ENCODE measurements at regions of chr1 and their contacts with region 1.

Region 1: DNA sequence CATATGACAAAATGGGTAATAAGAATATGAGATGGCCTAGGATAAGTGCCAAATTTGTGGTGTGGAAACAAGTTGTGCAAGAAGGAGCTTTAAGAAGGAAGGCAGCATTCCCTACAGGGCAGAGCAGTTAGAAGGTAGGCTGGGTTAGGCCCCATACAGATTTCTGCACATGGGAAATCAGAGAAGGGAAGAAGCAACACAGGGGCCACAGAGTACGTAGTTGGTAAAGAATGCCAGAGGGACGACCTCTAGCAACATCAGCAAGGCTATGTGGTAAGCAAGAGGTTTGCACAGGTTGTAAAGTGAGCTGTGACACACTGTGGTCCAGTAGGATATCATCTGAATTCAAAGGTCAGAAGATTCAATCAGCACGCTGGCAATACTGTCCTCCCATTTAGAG is 765.6 kb upstream of the B3GALT2 start:
- DNase-seq: peak; percentile 66
- H3K4me3 Mint-ChIP-seq: no peak overlapping the region
- H3K27ac Mint-ChIP-seq: no peak overlapping the region
- H3K4me1 Mint-ChIP-seq: peaks cover 13% of the 10 kb centered on the region
- H3K27me3 Mint-ChIP-seq: no peaks in the 10 kb centered on the region
- CTCF ChIP-seq: no peak

Region 2: DNA sequence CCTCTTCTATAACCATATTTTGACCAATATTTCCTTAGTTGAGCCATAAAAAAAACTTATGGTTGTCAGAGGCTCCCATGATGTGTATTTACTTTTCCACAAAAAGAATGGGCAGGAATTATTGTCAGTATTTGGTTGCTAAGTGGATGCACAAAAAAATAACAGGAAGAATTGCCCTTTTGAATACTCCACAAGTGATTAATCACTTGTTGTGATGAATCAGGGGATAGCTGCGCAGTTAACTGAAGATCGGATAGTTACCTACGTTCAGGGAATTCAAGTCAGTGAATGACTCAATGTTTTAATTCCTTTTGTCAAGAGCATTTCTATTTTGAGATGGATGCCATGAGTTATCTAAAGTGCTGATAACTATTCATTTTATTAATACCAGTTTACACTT is 19.6 kb after region 1 on chr1:
- CTCF ChIA-PET with region 1: interaction called, 3 read pairs
- POLR2A ChIA-PET with region 1: no interaction called
- intact Hi-C with region 1: loop called (anchors 2 kb)
- DNase-seq: peak; percentile 65
- H3K4me3 Mint-ChIP-seq: no peak overlapping the region
- H3K27ac Mint-ChIP-seq: peak overlapping the region; percentile 32
- H3K4me1 Mint-ChIP-seq: peaks cover 13% of the 10 kb centered on the region
- H3K27me3 Mint-ChIP-seq: no peaks in the 10 kb centered on the region
- CTCF ChIP-seq: no peak